Left cardiac atrium (tissue), 4 donors: ENCODE measurements at regions of chr3 and their contacts with region 1.

Region 1: DNA sequence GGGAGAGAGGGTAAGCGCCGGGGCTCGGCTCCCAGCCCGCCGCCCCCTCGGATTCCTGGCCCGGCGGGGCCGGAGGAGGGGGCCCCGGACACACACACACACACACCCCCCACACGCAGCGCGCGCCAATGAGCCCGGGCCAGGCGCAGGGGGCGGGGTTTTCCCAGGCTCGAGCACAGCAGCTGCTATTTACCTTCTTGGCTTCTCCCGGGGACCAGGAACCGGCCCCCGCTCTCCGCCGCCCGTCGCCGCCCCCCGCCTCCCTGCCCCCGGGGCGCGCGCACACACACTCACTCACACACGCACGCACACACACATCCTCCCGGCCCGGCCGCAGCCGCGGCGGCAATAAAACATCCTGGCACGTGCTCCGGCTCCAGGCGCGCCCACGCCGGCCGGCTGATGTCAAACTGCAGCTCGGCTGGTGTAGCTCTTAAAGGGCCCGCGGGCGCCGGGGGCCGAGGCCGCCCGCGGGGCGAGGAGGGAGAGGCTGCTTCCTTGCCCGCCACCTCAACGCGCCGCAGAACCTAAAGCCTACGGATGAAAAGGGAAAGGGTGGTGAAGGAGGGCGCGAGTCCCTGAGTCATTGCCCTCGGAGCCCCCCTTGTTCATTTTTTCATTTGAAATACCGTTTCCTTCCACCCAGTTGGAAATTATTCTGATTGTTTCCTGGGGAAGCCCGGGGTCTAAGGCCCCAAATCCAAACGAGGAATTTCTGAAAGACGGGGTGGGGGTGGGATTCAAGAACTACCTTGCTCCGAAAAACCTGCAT is 1.0 kb upstream of the HES1 start:
- DNase-seq: peak; percentile 95
- ATAC-seq: peak; percentile 56 to 73

Region 2: DNA sequence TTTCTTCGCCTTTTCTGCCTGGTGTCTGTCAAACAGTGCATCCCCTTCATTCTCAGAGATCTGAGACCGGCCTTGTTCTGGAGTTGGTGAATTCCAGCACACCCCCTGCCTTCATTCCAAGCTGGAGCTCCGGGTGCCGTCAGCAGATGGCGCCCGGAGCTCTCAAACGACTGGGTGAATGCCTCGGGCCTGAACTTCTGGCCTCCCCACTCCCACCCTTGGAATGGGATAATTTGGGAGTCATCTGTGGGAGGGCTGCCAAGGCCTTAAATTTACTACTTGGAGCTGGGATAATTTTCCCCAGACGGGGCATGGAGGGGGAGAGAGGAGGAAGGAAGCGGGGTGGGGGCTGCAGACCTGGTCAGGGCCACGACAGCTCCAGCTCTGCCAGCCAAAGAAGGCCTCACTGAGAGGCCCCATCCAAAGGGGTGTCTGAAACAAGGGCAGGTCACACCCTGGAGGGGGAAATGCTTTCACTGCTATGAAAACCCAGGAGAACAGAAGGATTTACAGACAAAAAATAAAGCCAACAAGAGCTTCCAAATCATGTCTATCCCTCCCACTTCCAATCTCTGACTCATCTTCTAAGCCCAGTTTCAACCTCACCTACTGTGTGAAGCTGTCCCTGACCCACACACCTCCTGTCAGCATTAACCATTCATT is 354.0 kb before region 1 on chr3:
- intact Hi-C with region 1: loop called in 1 of 2 experiments (anchors 5 kb)
- DNase-seq: peak; percentile 82
- ATAC-seq: peak; percentile 94 to 96

Region 3: GRCh38 chr3:193869221-193870201 is 265.4 kb before region 1 on chr3:
- intact Hi-C with region 1: loop called in 1 of 2 experiments (anchors 10 kb)
- DNase-seq: peak; percentile 74
- ATAC-seq: peak; percentile 67 to 90

Region 4: GRCh38 chr3:193928354-193929209 is 206.4 kb before region 1 on chr3:
- intact Hi-C with region 1: no loop called
- DNase-seq: no peak
- ATAC-seq: peak in 1 of 2 donors; percentile 84

Region 5: GRCh38 chr3:194070634-194071409 is 64.1 kb before region 1 on chr3:
- intact Hi-C with region 1: loop called (anchors 2 to 5 kb)
- DNase-seq: peak; percentile 91
- ATAC-seq: peak; percentile 91 to 92

Region 6: DNA sequence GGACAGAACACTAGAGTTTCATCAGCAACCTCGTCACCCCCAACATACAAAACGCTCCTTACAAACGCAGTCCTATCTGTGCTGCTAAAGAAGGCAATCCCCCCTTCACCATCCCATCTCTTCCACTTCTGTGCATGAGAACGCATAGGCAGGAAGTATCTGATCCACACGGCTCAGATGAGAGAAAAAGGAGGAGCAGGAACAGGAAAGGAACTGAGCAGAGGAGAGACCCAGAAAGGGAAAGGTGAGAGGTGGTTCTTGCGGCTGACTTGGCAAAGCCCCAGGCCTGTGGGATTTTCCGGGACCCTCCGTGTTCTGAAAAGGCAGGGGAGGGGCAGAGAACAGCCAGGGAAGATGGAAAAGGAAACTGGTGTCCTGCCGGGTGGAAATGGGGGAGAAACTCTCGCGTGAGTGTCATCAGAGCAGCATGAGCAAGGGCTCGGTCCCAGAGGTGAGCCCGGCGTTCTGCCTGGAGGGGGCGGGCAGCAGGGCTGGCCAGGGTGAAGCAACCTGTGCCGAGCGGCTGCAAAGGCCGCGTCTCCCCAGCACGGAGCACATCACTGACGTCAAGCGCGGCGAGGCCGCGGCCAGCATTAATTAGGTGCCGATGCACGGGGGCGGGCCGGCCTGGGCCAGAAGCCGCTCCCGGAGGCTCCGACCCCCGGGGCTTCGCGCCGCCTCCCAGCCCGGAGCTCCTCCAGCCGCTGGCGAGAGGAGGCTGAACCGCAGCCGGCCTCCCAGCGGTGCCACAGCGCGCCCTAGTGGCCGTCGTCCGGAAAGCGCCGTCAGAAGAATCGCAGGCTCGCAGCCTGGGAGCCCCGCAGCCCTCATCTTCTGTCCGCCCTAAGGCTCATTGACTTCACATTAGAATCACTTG is 180.4 kb after region 1 on chr3:
- intact Hi-C with region 1: loop called (anchors 2 to 5 kb)
- DNase-seq: peak; percentile 91
- ATAC-seq: peak; percentile 85 to 93

Region 7: DNA sequence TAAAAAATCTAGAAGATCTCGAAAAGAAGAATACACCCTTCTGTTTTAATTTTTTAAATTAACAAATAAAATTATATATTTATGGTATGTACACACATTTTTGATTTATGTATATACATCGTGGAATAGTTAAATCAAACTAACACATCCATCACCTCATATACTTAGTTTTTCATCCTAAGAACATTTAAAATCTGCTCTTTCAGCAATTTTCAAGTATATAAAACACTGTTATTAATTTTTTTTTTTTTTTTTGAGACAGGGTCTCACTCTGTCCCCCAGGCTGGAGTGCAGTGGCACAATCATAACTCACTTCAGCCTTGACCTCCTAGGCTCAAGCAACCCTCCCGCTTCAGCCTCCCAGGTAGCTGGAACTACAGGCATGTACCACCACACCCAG is 1340.7 kb after region 1 on chr3:
- intact Hi-C with region 1: no loop called
- DNase-seq: no peak
- ATAC-seq: no peak